PC-3 (cell line): ENCODE measurements at regions of chr10 and their contacts with region 1.

Region 1: GRCh38 chr10:22316285-22317120 is at the start of gene COMMD3:
- DNase-seq: peak; percentile 82
- ATAC-seq: peak; percentile 50
- H3K4me3 ChIP-seq: peak within 1 kb of the TSS; percentile 92
- H3K27ac ChIP-seq: peak within 1 kb of the TSS; percentile 99
- H3K4me1 ChIP-seq: peaks cover 37% of the 10 kb centered on the region
- H3K27me3 ChIP-seq: no peaks in the 10 kb centered on the region
- CTCF ChIP-seq: no peak
- total RNA-seq, gene COMMD3: 86.4 and 86.6 TPM in 2 replicates

Region 2: DNA sequence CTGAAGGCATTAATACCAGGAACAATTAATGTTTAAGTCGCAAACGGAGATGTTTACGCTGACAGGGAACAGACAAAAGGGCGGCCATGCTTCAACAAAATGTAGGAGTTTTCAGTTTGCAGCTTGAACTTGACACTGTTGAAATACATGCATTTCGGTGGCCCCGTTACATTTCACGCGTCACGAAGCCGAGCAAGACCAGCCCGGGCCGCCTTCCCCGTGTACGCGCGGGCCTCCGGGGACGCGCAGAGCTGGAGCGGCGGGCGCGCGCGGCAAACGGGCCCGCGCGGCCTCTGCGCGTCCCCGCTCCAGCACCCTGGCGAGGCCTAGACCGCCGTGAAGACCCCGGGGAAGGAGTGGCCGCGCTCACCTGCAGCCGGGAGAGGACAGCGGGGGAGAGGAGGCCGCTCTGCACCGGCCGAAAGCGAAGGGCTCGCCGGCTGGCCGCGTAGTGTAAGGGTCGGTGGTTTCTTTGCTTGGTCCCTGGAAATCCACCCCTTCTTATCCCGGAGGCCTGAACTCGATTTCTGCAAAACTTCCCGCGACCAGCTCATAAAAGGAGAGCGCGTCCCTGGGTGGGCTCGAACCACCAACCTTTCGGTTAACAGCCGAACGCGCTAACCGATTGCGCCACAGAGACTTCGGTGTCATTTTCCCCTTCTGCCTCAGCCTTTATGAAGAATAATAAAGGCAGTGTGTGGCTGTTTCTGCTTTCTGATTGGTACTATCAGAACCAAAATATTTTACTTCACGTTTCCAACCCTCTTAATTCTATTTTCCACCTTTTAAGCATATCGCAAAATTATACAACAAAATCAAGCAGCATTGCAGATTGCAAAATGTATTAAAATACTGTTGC is 87.3 kb before region 1 on chr10:
- CTCF ChIA-PET with region 1: no interaction called
- POLR2A ChIA-PET with region 1: interaction called, 3 read pairs
- intact Hi-C with region 1: loop called (anchors 1 kb)
- DNase-seq: peak; percentile 86
- ATAC-seq: peak; percentile 71
- H3K4me3 ChIP-seq: peak overlapping the region; percentile 99
- H3K27ac ChIP-seq: peak overlapping the region; percentile 86
- H3K4me1 ChIP-seq: peaks cover 14% of the 10 kb centered on the region
- H3K27me3 ChIP-seq: no peaks in the 10 kb centered on the region
- CTCF ChIP-seq: no peak

Region 3: GRCh38 chr10:22369434-22370072 is 53.0 kb after region 1 on chr10:
- CTCF ChIA-PET with region 1: no interaction called
- POLR2A ChIA-PET with region 1: no interaction called
- intact Hi-C with region 1: no loop called
- DNase-seq: peak; percentile 13
- ATAC-seq: no peak
- H3K4me3 ChIP-seq: no peak overlapping the region
- H3K27ac ChIP-seq: no peak overlapping the region
- H3K4me1 ChIP-seq: no peaks in the 10 kb centered on the region
- H3K27me3 ChIP-seq: no peaks in the 10 kb centered on the region
- CTCF ChIP-seq: no peak

Region 4: DNA sequence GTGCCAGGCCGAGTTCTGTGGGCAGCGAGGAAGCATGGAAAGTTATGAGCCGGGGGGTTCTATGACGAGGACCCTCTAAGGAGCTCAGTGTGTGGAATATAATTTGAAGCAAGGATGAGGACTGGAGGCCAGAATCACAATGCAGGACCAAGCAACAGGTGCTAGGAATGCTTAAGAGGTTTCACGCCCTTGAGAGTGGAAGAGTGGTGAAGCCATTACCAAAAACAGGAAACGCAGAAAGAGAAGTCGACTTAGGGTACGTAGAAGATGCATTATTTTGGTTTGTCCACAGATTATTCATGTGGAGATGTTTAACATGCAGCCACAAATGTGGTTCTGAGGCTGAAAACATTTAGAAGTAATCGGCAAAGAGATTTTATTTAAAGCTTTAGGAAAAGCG is 319.1 kb after region 1 on chr10:
- CTCF ChIA-PET with region 1: no interaction called
- POLR2A ChIA-PET with region 1: no interaction called
- intact Hi-C with region 1: no loop called
- DNase-seq: no peak
- ATAC-seq: no peak
- H3K4me3 ChIP-seq: no peak overlapping the region
- H3K27ac ChIP-seq: no peak overlapping the region
- H3K4me1 ChIP-seq: peaks cover 20% of the 10 kb centered on the region
- H3K27me3 ChIP-seq: no peaks in the 10 kb centered on the region
- CTCF ChIP-seq: no peak